IMR-90 (cell line): ENCODE measurements at regions of chr14 and their contacts with region 1.

Region 1: GRCh38 chr14:23006544-23007419 is 3.2 kb downstream of the C14orf93 start:
- DNase-seq: peak; percentile 97
- ATAC-seq: peak; percentile 97
- H3K4me3 ChIP-seq: peak overlapping the region; percentile 58
- H3K27ac ChIP-seq: peak overlapping the region; percentile 82
- H3K4me1 ChIP-seq: peaks cover 2% of the 10 kb centered on the region; the same call in 1 of the 2 replicates
- H3K27me3 ChIP-seq: no peaks in the 10 kb centered on the region
- CTCF ChIP-seq: peak; percentile 32
- POLR2A ChIP-seq: peak; percentile 70
- RAD21 ChIP-seq: no peak

Region 2: GRCh38 chr14:22767323-22767589 is 239.5 kb before region 1 on chr14:
- CTCF ChIA-PET with region 1: no interaction called
- POLR2A ChIA-PET with region 1: no interaction called
- dilution Hi-C with region 1: no loop called
- in situ Hi-C with region 1: no loop called
- intact Hi-C with region 1: no loop called
- DNase-seq: no peak
- ATAC-seq: peak; percentile 4; the same call in 1 of the 2 replicates
- H3K4me3 ChIP-seq: peak overlapping the region; percentile 90
- H3K27ac ChIP-seq: peak overlapping the region; percentile 92
- H3K4me1 ChIP-seq: peaks cover 5% of the 10 kb centered on the region
- H3K27me3 ChIP-seq: no peaks in the 10 kb centered on the region
- CTCF ChIP-seq: no peak
- POLR2A ChIP-seq: no peak
- RAD21 ChIP-seq: no peak

Region 3: DNA sequence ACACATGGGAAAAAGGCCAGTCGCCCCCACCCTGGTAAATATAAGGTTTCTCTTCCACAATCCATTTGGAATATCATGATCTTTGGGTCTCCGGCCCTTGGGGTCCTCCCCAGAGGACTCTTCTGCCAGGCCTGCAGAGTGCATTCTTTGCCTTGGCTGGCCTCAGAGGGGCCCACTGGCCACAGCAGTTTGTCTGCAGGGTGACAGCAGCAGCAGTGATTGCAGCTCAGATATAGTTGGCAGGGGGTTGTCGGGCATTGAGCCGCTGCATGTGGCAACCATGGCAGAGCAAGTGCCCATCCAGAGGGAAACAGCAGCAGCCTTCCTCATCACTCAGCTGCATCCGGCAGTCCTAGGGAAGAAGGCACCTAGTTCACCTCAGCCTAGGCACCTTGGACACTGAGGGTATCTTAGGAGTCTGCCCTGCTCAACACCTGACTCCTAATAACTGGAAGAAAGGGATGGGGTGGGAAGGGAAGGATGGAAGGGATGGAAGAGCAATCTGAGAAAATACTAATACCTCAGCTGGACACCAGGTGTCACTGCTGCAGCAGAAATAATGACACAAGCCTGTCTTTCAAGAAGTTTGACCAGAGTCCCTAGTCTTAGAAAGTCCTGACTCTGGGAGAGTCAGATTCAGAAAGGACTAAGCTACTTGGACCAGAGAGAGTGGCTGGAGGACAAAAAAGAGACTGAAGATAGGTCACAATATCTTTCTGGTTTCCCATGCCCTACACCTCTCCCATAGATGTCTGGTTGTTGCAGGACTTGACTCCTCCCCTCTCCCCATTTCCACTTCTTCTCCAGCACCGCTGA is 33.4 kb before region 1 on chr14:
- CTCF ChIA-PET with region 1: interaction called, 3 read pairs
- POLR2A ChIA-PET with region 1: interaction called, 13 read pairs
- dilution Hi-C with region 1: no loop called
- in situ Hi-C with region 1: no loop called
- intact Hi-C with region 1: no loop called
- DNase-seq: peak; percentile 70
- ATAC-seq: peak; percentile 36
- H3K4me3 ChIP-seq: no peak overlapping the region
- H3K27ac ChIP-seq: no peak overlapping the region
- H3K4me1 ChIP-seq: peaks cover 26% of the 10 kb centered on the region
- H3K27me3 ChIP-seq: no peaks in the 10 kb centered on the region
- CTCF ChIP-seq: peak; percentile 71
- POLR2A ChIP-seq: no peak
- RAD21 ChIP-seq: peak; percentile 79

Region 4: GRCh38 chr14:22994762-22995275 is 12.0 kb before region 1 on chr14:
- CTCF ChIA-PET with region 1: interaction called, 20 read pairs
- POLR2A ChIA-PET with region 1: interaction called, 7 read pairs
- dilution Hi-C with region 1: no loop called
- in situ Hi-C with region 1: no loop called
- intact Hi-C with region 1: no loop called
- DNase-seq: peak; percentile 48
- ATAC-seq: peak; percentile 94
- H3K4me3 ChIP-seq: no peak overlapping the region
- H3K27ac ChIP-seq: no peak overlapping the region
- H3K4me1 ChIP-seq: peaks cover 4% of the 10 kb centered on the region
- H3K27me3 ChIP-seq: no peaks in the 10 kb centered on the region; the same call in 1 of the 2 replicates
- CTCF ChIP-seq: peak; percentile 71
- POLR2A ChIP-seq: no peak
- RAD21 ChIP-seq: peak; percentile 71

Region 5: DNA sequence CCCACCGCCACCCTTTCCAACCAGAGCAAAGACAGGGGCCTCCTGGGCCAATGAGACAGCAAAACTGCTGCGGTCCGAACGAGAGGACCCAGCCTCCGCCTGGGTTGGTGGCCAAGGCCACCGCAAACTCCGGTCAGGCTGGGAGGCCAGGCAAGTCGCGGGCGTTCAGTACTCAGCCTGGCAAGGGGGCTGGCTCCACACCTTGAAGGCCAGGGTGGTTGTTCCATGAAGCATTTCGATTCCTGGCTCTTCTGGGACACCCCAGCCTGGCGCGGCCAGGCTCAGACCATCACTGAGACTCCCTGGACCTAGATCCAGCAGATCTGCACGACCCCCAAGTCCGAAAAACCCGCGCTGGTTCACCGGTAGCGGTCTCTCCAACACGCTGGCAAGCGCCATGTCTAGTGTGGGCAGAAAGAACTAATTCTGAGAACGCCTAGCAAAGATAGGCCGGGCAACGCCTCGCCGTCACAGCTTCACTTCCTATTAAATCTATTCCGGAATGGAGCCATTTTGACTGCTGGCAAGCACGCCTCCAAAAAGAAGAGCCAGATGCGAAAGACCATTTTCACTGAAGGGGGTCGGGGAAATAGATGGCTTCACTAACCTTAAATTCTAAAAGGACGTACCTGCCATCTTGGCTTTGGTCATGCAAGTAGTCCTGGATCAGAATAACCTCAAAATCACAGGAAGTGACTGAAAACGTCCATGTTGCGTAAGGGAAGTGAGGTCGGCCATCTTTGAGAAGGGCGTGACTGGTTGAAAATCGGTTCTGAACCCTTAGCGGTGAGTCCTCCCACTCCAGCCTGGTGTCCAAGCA is 27.9 kb after region 1 on chr14 and contains the start of gene PSMB5:
- CTCF ChIA-PET with region 1: interaction called, 3 read pairs
- POLR2A ChIA-PET with region 1: no interaction called
- dilution Hi-C with region 1: no loop called
- in situ Hi-C with region 1: no loop called
- intact Hi-C with region 1: loop called (anchors 2 kb)
- DNase-seq: peak; percentile 96
- ATAC-seq: peak; percentile 98
- H3K4me3 ChIP-seq: peak within 1 kb of the TSS; percentile 70
- H3K27ac ChIP-seq: peak within 1 kb of the TSS; percentile 87
- H3K4me1 ChIP-seq: peaks cover 6% of the 10 kb centered on the region; the same call in 1 of the 2 replicates
- H3K27me3 ChIP-seq: no peaks in the 10 kb centered on the region
- CTCF ChIP-seq: no peak
- POLR2A ChIP-seq: peak; percentile 87
- RAD21 ChIP-seq: no peak
- total RNA-seq, gene PSMB5: 268 and 310 TPM in 2 replicates

Region 6: GRCh38 chr14:23237772-23238594 is 231.2 kb after region 1 on chr14 and contains the start of gene RNF212B:
- CTCF ChIA-PET with region 1: no interaction called
- POLR2A ChIA-PET with region 1: no interaction called
- dilution Hi-C with region 1: no loop called
- in situ Hi-C with region 1: no loop called
- intact Hi-C with region 1: no loop called
- DNase-seq: peak; percentile 44
- ATAC-seq: peak; percentile 99
- H3K4me3 ChIP-seq: peak within 1 kb of the TSS; percentile 35
- H3K27ac ChIP-seq: no peak within 1 kb of the TSS
- H3K4me1 ChIP-seq: no peaks in the 10 kb centered on the region; the same call in 1 of the 2 replicates
- H3K27me3 ChIP-seq: no peaks in the 10 kb centered on the region; the same call in 1 of the 2 replicates
- CTCF ChIP-seq: no peak
- POLR2A ChIP-seq: no peak
- RAD21 ChIP-seq: no peak
- total RNA-seq, gene RNF212B: not detected in 2 replicates

Region 7: DNA sequence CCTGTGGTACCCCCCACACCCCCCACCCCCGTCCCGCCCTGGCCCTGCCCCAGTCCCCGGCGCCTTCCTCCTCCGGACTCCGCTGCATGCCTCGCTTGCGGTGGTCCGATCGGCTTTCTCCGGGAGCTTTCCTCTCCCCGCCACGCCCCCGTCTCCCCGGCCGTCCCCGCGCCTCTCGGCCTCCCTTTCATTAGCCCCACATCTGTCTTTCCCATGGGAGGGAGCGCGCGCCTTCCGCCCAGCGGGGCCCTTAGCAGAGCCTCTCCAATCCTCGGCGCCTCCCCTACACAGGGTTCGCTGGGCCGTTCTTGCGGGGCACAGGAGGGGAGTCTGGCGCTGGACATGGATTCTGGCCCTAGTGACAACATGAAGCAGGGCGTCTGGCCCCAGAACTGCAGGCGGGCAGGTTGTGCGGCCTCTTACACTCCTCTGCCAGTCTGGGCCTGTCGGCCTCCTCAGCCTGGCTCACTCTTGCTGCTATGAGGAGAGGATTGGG is 359.7 kb after region 1 on chr14:
- CTCF ChIA-PET with region 1: no interaction called
- POLR2A ChIA-PET with region 1: no interaction called
- dilution Hi-C with region 1: no loop called
- in situ Hi-C with region 1: no loop called
- intact Hi-C with region 1: no loop called
- DNase-seq: peak; percentile 62
- ATAC-seq: peak; percentile 69
- H3K4me3 ChIP-seq: peak overlapping the region; percentile 19
- H3K27ac ChIP-seq: peak overlapping the region; percentile 89
- H3K4me1 ChIP-seq: peaks cover 7% of the 10 kb centered on the region
- H3K27me3 ChIP-seq: peaks cover 19% of the 10 kb centered on the region; the same call in 1 of the 2 replicates
- CTCF ChIP-seq: no peak
- POLR2A ChIP-seq: no peak
- RAD21 ChIP-seq: no peak